ENCODE measurements at regions of chr5 and their contacts with region 1.

Region 1: GRCh38 chr5:152170350-152170749 is 234.7 kb downstream of the NMUR2 start:
- DNase-seq: peak; percentile 25
- ATAC-seq: no peak; the same call in 1 of the 2 replicates
- H3K4me3 ChIP-seq: no peak overlapping the region
- H3K27ac ChIP-seq: no peak overlapping the region
- H3K4me1 ChIP-seq: no peaks in the 10 kb centered on the region
- H3K27me3 ChIP-seq: no peaks in the 10 kb centered on the region
- CTCF ChIP-seq: no peak

Region 2: DNA sequence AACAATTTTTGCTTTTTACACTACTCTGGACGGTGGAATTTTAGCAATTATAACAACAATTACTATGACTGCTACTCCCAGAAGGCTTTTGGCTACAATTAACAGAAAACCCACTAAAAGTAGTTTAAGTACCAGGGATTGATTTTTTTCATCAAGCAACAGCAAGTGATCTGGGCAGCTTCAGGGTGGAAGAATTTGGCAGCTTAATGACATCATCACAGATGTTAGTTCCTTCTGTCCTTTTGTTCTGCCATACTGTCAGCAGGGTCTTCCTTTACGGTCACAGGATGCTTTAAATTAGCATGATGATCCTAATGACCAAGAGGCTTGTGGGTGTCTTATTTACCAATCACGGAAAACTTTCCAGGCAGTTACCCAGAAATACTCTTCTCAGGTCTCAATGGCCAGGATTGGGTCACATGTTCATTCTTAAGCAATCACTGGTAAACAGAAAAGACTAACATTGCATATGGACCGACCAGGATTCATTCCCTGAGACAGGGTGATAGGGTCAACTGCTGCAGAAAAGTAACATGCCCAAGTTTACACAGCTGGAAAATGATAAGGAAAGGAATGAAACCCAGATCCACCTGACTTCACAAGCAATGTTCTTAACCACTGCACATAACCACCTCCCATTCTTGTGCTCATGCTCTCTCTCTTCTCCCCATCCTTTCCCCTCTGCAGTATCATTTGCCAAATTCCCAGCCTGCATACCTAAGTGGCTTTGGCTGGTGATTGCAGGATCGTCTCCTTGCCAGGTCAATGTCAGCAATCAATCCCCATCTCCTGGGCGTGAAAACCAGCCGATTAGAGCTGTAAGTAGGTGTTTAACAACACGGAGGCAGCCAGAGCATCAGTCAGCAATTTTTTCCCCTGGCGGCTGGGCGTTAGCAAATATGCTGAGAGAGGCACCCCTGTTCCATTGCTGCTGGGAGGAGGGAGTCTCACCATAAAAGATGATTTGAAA is 15.2 kb after region 1 on chr5:
- CTCF ChIA-PET with region 1: interaction called, 11 read pairs
- POLR2A ChIA-PET with region 1: no interaction called
- intact Hi-C with region 1: no loop called
- DNase-seq: no peak
- ATAC-seq: no peak
- H3K4me3 ChIP-seq: no peak overlapping the region
- H3K27ac ChIP-seq: no peak overlapping the region
- H3K4me1 ChIP-seq: peaks cover 41% of the 10 kb centered on the region
- H3K27me3 ChIP-seq: no peaks in the 10 kb centered on the region
- CTCF ChIP-seq: no peak

Region 3: GRCh38 chr5:152193367-152194107 is 23.2 kb after region 1 on chr5:
- CTCF ChIA-PET with region 1: interaction called, 11 read pairs
- POLR2A ChIA-PET with region 1: no interaction called
- intact Hi-C with region 1: no loop called
- DNase-seq: peak; percentile 90
- ATAC-seq: peak; percentile 76
- H3K4me3 ChIP-seq: peak overlapping the region; percentile 38
- H3K27ac ChIP-seq: peak overlapping the region; percentile 86
- H3K4me1 ChIP-seq: peaks cover 52% of the 10 kb centered on the region
- H3K27me3 ChIP-seq: no peaks in the 10 kb centered on the region
- CTCF ChIP-seq: no peak

Region 4: DNA sequence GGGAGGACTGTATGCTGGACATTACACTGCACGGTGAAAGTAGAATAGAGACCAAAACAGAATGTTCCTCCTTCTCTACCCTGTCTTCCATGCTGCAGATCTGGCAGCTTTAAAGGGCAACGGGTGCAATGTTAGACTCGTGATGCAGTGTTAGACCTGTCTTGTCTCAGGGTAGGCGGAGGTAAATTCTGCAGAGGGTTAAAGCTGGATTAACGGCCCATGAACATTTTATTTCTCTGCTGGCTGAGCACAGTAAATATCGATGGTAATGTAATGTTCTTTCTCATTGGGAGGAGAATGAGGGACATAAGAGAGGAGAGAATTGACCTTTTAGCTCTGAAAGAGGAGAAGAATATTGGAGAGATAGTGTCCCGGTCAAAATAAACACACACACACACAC is 55.8 kb after region 1 on chr5:
- CTCF ChIA-PET with region 1: no interaction called
- POLR2A ChIA-PET with region 1: no interaction called
- intact Hi-C with region 1: no loop called
- DNase-seq: no peak
- ATAC-seq: no peak
- H3K4me3 ChIP-seq: no peak overlapping the region
- H3K27ac ChIP-seq: no peak overlapping the region
- H3K4me1 ChIP-seq: no peaks in the 10 kb centered on the region
- H3K27me3 ChIP-seq: no peaks in the 10 kb centered on the region
- CTCF ChIP-seq: no peak

Measured in PC-3 (cell line).